K562 (cell line): ENCODE measurements at regions of chr11 and their contacts with region 1.

Region 1: DNA sequence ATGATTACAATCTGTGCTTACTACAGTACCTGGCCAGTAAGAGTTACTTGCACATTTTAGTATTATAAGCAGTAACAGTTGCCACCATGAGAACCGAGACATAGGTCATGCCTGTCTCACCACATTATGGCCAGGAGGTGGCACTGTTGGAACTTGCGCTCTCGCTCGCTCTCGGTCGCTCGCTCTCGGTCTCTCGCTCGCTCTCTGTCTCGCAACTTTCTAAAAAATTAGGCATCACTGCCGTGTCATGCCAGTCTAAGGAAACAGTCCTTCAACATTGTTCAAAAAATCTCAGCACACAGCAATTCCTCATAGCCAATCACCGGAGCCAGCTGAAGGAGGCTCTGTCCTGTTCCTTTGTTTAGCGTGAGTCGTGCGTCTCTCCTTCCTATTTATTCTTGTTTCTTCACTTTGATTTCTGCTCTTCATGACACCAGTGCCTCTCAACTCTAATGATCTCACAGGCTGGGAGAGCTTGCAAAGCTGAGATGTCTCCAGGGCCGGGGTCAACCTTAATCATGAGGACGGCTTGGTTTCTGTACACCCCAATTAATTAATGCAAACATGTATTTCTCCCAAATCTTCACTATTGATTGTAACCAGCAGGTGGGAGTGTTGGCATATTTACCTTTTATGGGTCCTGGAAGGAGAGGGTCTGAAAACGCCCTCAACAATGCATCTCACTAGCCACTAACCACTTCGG is 6.3 kb upstream of the ADAMTS8 start:
- DNase-seq: peak; percentile 67 to 80 (median 74)
- ATAC-seq: peak; percentile 94
- H3K4me3 ChIP-seq: peak overlapping the region; percentile 36
- H3K27ac ChIP-seq: no peak overlapping the region
- H3K4me1 ChIP-seq: no peaks in the 10 kb centered on the region
- H3K27me3 ChIP-seq: peaks cover 7 to 17% of the 10 kb centered on the region in 2 experiments; a peak in 3 of 5 replicates
- CTCF ChIP-seq: peak; percentile 86 to 90 (median 86)
- EP300 ChIP-seq: no peak
- POLR2A ChIP-seq: no peak
- RAD21 ChIP-seq: peak; percentile 61 to 80

Region 2: GRCh38 chr11:130213143-130213978 is 221.3 kb before region 1 on chr11:
- CTCF ChIA-PET with region 1: interaction called, 12 read pairs
- POLR2A ChIA-PET with region 1: no interaction called
- in situ Hi-C with region 1: loop called (anchors 10 kb)
- intact Hi-C with region 1: loop called (anchors 1 kb)
- DNase-seq: peak; percentile 76 to 88 (median 86)
- ATAC-seq: peak; percentile 93
- H3K4me3 ChIP-seq: no peak overlapping the region
- H3K27ac ChIP-seq: no peak overlapping the region
- H3K4me1 ChIP-seq: peaks cover 0 to 16% of the 10 kb centered on the region in 2 experiments; a peak in 1 of 5 replicates
- H3K27me3 ChIP-seq: peaks cover 31 to 90% of the 10 kb centered on the region in 2 experiments; a peak in 4 of 5 replicates
- CTCF ChIP-seq: peak; percentile 89 to 93 (median 92)
- EP300 ChIP-seq: no peak
- POLR2A ChIP-seq: no peak
- RAD21 ChIP-seq: peak; percentile 86 to 95

Region 3: DNA sequence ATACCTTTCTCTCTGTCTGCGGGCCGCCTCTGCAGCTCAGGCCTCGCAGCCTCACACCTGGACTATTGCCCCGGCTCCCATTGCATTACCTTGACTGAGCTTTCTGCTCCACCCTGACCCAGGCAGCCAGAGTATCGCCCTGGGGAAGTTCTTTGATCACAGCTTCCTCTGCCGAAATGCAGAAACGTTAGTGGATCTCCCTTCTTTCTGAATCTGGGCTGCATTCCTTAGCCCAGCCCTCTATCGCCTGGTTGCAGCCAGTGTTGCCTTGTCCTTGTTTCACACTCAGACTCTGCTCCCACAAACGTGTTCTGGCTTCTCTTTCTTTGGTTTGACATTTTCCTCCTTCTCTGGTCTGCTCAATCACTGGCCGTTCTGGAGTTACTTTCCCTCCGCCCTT is 209.5 kb after region 1 on chr11:
- CTCF ChIA-PET with region 1: no interaction called
- POLR2A ChIA-PET with region 1: no interaction called
- in situ Hi-C with region 1: no loop called
- intact Hi-C with region 1: loop called (anchors 5 kb)
- DNase-seq: no peak
- ATAC-seq: no peak
- H3K4me3 ChIP-seq: no peak overlapping the region
- H3K27ac ChIP-seq: no peak overlapping the region
- H3K4me1 ChIP-seq: no peaks in the 10 kb centered on the region
- H3K27me3 ChIP-seq: peaks cover 6 to 36% of the 10 kb centered on the region in 2 experiments; a peak in 4 of 5 replicates
- CTCF ChIP-seq: no peak
- EP300 ChIP-seq: no peak
- POLR2A ChIP-seq: no peak
- RAD21 ChIP-seq: no peak

Region 4: GRCh38 chr11:130827451-130828377 is 393.0 kb after region 1 on chr11:
- CTCF ChIA-PET with region 1: interaction called, 4 read pairs
- POLR2A ChIA-PET with region 1: no interaction called
- in situ Hi-C with region 1: no loop called
- intact Hi-C with region 1: loop called (anchors 1 kb)
- DNase-seq: peak; percentile 28 to 48 (median 36)
- ATAC-seq: peak; percentile 85
- H3K4me3 ChIP-seq: no peak overlapping the region
- H3K27ac ChIP-seq: no peak overlapping the region
- H3K4me1 ChIP-seq: no peaks in the 10 kb centered on the region
- H3K27me3 ChIP-seq: peaks cover 0 to 37% of the 10 kb centered on the region in 2 experiments; a peak in 2 of 5 replicates
- CTCF ChIP-seq: peak in 2 of 3 experiments; percentile 42 to 59; a peak in 4 of 6 replicates
- EP300 ChIP-seq: no peak
- POLR2A ChIP-seq: no peak
- RAD21 ChIP-seq: peak in 1 of 2 experiments; percentile 47; a peak in 1 of 4 replicates

Region 5: GRCh38 chr11:130861902-130862860 is 427.5 kb after region 1 on chr11:
- CTCF ChIA-PET with region 1: interaction called, 259 read pairs
- POLR2A ChIA-PET with region 1: no interaction called
- in situ Hi-C with region 1: loop called (anchors 5 kb)
- intact Hi-C with region 1: loop called (anchors 1 kb)
- DNase-seq: peak; percentile 81 to 94 (median 87)
- ATAC-seq: peak; percentile 94
- H3K4me3 ChIP-seq: no peak overlapping the region
- H3K27ac ChIP-seq: no peak overlapping the region
- H3K4me1 ChIP-seq: peaks cover 0 to 3% of the 10 kb centered on the region in 2 experiments; a peak in 1 of 5 replicates
- H3K27me3 ChIP-seq: peaks cover 8 to 20% of the 10 kb centered on the region in 2 experiments
- CTCF ChIP-seq: peak; percentile 100
- EP300 ChIP-seq: no peak
- POLR2A ChIP-seq: no peak
- RAD21 ChIP-seq: peak; percentile 96 to 99

Region 6: DNA sequence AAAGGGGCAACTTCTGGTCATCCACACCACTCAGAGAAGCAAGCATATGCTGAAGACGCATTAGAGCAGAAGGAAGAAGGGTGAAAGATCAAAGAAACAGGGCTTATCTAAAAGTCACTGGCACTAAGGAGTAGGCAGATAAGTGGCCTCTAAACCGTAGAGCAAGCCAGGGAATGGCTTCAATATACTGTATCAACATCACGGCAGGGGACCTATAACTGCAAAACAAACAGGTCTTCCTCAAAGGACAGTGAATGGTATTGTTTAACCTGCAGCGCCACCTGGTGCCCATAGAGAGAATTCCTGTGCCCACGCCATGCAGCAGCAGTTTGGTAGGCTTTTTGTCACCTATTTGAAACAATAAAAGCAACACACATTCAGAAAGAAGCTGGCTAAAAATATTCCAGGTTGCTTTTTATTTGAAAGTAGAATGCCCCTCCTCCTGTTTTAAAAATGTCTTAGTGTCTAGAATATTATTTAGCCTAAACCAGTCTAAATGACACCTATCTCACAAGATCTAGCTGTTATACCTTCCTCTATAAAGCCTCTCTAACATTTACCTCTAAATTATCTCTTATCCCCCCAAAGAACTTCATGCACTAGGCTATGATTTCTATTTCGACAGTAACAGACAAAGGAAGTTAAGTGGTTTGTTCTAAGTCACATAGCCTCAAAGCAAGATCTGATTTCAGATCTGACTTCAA is 459.8 kb after region 1 on chr11:
- CTCF ChIA-PET with region 1: interaction called, 27 read pairs
- POLR2A ChIA-PET with region 1: interaction called, 3 read pairs
- in situ Hi-C with region 1: no loop called
- intact Hi-C with region 1: loop called (anchors 1 kb)
- DNase-seq: peak; percentile 62 to 81 (median 62)
- ATAC-seq: peak; percentile 100
- H3K4me3 ChIP-seq: no peak overlapping the region
- H3K27ac ChIP-seq: no peak overlapping the region
- H3K4me1 ChIP-seq: peaks cover 0 to 4% of the 10 kb centered on the region in 2 experiments; a peak in 2 of 5 replicates
- H3K27me3 ChIP-seq: no peaks in the 10 kb centered on the region
- CTCF ChIP-seq: peak; percentile 64 to 83 (median 83)
- EP300 ChIP-seq: no peak
- POLR2A ChIP-seq: no peak
- RAD21 ChIP-seq: peak; percentile 51 to 64

Region 7: DNA sequence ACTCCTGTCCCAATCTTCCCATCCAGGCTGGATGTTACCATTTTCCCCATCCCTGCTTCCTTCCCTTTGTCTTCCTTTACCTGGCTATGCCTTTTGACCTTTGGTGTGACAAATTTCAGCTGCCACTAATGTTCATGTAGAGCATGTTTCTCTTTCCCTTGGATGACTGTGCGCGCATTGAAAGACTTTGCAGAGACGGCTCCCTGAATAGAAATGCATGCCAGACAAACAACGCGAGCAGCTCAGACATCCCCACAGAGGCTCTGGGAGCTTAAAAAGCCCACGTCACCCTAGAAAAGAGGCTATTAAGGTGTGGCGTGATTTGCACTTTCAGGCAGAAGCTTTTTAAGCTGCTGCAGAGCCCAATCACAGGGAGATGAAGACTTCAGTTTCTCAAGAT is 1137.8 kb after region 1 on chr11:
- CTCF ChIA-PET with region 1: no interaction called
- POLR2A ChIA-PET with region 1: no interaction called
- in situ Hi-C with region 1: no loop called
- intact Hi-C with region 1: no loop called
- DNase-seq: no peak
- ATAC-seq: no peak
- H3K4me3 ChIP-seq: no peak overlapping the region
- H3K27ac ChIP-seq: no peak overlapping the region
- H3K4me1 ChIP-seq: no peaks in the 10 kb centered on the region
- H3K27me3 ChIP-seq: no peaks in the 10 kb centered on the region
- CTCF ChIP-seq: no peak
- EP300 ChIP-seq: no peak
- POLR2A ChIP-seq: no peak
- RAD21 ChIP-seq: no peak